Left lung (tissue), 14 donors: ENCODE measurements at regions of chrX and their contacts with region 1.

Region 1: GRCh38 chrX:94576375-94577004 is 902.5 kb downstream of the FAM133A start:
- DNase-seq: no peak
- ATAC-seq: no peak
- H3K4me3 ChIP-seq: no peak overlapping the region
- H3K27ac ChIP-seq: no peak overlapping the region
- H3K4me1 ChIP-seq: no peaks in the 10 kb centered on the region
- H3K27me3 ChIP-seq: no peaks in the 10 kb centered on the region
- CTCF ChIP-seq: no peak

Region 2: GRCh38 chrX:94743478-94743877 is 167.0 kb after region 1 on chrX:
- intact Hi-C with region 1: loop called in 1 of 2 experiments (anchors 10 kb)
- DNase-seq: no peak
- ATAC-seq: peak; percentile 68
- H3K4me3 ChIP-seq: no peak overlapping the region
- H3K27ac ChIP-seq: no peak overlapping the region
- H3K4me1 ChIP-seq: peaks cover 0 to 4% of the 10 kb centered on the region in 2 donors
- H3K27me3 ChIP-seq: no peaks in the 10 kb centered on the region
- CTCF ChIP-seq: no peak